Endothelial cell of umbilical vein (primary cell): ENCODE measurements at regions of chr3 and their contacts with region 1.

Region 1: GRCh38 chr3:17742108-17742879 is at the start of gene TBC1D5:
- DNase-seq: peak; percentile 99
- H3K4me3 ChIP-seq: peak within 1 kb of the TSS; percentile 57 to 92 (median 72)
- H3K27ac ChIP-seq: peak within 1 kb of the TSS; percentile 81
- H3K4me1 ChIP-seq: peaks cover 27% of the 10 kb centered on the region
- H3K27me3 ChIP-seq: no peaks in the 10 kb centered on the region
- CTCF ChIP-seq: no peak
- POLR2A ChIP-seq: peak; percentile 82
- total RNA-seq, gene TBC1D5: 40.1 and 44.7 TPM in 2 replicates

Region 2: GRCh38 chr3:17290894-17291293 is 451.4 kb before region 1 on chr3:
- CTCF ChIA-PET with region 1: no interaction called
- POLR2A ChIA-PET with region 1: no interaction called
- dilution Hi-C with region 1: no loop called
- intact Hi-C with region 1: no loop called
- DNase-seq: no peak
- H3K4me3 ChIP-seq: no peak overlapping the region
- H3K27ac ChIP-seq: no peak overlapping the region
- H3K4me1 ChIP-seq: no peaks in the 10 kb centered on the region
- H3K27me3 ChIP-seq: no peaks in the 10 kb centered on the region
- CTCF ChIP-seq: no peak
- POLR2A ChIP-seq: no peak

Region 3: GRCh38 chr3:17466028-17466427 is 276.3 kb before region 1 on chr3:
- CTCF ChIA-PET with region 1: no interaction called
- POLR2A ChIA-PET with region 1: interaction called, 13 read pairs
- dilution Hi-C with region 1: no loop called
- intact Hi-C with region 1: no loop called
- DNase-seq: no peak
- H3K4me3 ChIP-seq: no peak overlapping the region
- H3K27ac ChIP-seq: no peak overlapping the region
- H3K4me1 ChIP-seq: no peaks in the 10 kb centered on the region
- H3K27me3 ChIP-seq: no peaks in the 10 kb centered on the region
- CTCF ChIP-seq: no peak
- POLR2A ChIP-seq: no peak

Region 4: GRCh38 chr3:17632401-17633100 is 109.7 kb before region 1 on chr3:
- CTCF ChIA-PET with region 1: interaction called, 5 read pairs
- POLR2A ChIA-PET with region 1: no interaction called
- dilution Hi-C with region 1: no loop called
- intact Hi-C with region 1: loop called (anchors 1 kb)
- DNase-seq: peak; percentile 29
- H3K4me3 ChIP-seq: no peak overlapping the region
- H3K27ac ChIP-seq: no peak overlapping the region
- H3K4me1 ChIP-seq: peaks cover 19% of the 10 kb centered on the region
- H3K27me3 ChIP-seq: no peaks in the 10 kb centered on the region
- CTCF ChIP-seq: no peak
- POLR2A ChIP-seq: no peak

Region 5: DNA sequence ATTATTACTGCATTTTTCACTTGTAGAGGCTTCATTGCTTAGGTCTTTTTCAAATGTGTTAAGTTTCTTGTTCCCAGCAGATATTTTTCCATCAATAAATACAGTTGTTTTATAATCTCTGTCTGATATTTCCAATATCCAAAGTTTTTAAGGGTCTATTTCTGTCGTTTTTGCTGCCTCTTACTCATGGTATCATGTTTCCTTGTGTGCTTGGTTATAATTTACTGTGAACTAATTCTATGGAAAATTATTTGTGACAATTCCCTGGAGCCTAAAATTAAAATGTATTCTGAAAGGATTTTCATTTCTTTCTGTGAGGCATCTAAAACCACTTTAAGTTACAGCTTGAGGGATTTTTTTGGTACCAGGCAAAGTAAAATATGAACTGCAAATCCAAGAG is 17.3 kb before region 1 on chr3:
- CTCF ChIA-PET with region 1: no interaction called
- POLR2A ChIA-PET with region 1: no interaction called
- dilution Hi-C with region 1: no loop called
- intact Hi-C with region 1: no loop called
- DNase-seq: no peak
- H3K4me3 ChIP-seq: no peak overlapping the region
- H3K27ac ChIP-seq: no peak overlapping the region
- H3K4me1 ChIP-seq: no peaks in the 10 kb centered on the region
- H3K27me3 ChIP-seq: no peaks in the 10 kb centered on the region
- CTCF ChIP-seq: no peak
- POLR2A ChIP-seq: no peak